IMR-90 (cell line): ENCODE measurements at regions of chr2 and their contacts with region 1.

Region 1: GRCh38 chr2:68127358-68128242 is 30.1 kb upstream of the PNO1 start:
- DNase-seq: no peak
- ATAC-seq: no peak
- H3K4me3 ChIP-seq: no peak overlapping the region
- H3K27ac ChIP-seq: no peak overlapping the region
- H3K4me1 ChIP-seq: no peaks in the 10 kb centered on the region; the same call in 1 of the 2 replicates
- H3K27me3 ChIP-seq: no peaks in the 10 kb centered on the region
- CTCF ChIP-seq: no peak
- POLR2A ChIP-seq: no peak
- RAD21 ChIP-seq: no peak

Region 2: DNA sequence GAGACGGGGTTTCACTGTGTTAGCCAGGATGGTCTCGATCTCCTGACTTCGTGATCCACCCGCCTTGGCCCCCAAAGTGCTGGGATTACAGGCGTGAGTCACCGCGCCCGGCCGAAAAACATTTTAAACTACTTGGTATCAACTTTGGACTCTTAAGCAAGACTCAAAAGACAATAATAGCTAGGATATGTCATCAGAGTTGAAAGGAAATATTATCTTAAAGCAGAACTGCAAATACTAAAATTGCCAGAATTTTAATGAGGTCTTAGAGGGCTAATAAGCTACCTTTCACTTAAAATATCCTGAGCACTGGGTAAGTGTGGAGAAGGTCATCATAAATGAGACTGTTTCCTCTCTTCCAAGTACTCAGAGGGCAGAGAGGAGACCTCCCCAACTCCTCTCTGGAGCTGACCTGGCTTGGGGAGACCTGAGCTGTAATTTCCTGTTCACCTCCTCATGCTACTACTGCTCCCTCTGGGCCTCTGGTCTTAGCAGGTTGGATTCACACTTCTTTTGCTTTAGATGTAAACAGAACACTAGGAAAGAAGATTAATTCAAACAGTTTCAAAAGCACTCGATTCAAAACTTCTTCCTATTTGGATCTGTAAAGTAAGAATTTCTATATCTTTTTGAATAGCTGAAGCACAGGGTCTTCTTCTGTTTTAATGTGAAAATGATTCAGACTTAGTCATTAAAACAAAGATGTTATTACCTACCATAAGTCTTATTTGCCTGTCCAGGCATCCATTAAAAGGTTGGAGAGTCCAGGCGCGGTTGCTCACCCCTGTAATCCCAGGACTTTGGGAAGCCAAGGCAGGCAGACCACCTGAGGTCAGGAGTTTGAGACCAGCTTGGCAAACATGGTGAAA is 175.7 kb after region 1 on chr2:
- CTCF ChIA-PET with region 1: no interaction called
- POLR2A ChIA-PET with region 1: interaction called, 12 read pairs
- dilution Hi-C with region 1: no loop called
- in situ Hi-C with region 1: no loop called
- intact Hi-C with region 1: no loop called
- DNase-seq: peak; percentile 41
- ATAC-seq: no peak
- H3K4me3 ChIP-seq: no peak overlapping the region
- H3K27ac ChIP-seq: no peak overlapping the region
- H3K4me1 ChIP-seq: peaks cover 3% of the 10 kb centered on the region
- H3K27me3 ChIP-seq: no peaks in the 10 kb centered on the region
- CTCF ChIP-seq: no peak
- POLR2A ChIP-seq: no peak
- RAD21 ChIP-seq: no peak